Activated CD4-positive, alpha-beta memory T cell treated with anti-CD3 and anti-CD28 coated beads for 36 hours (primary cell): ENCODE measurements at regions of chr3 and their contacts with region 1.

Region 1: DNA sequence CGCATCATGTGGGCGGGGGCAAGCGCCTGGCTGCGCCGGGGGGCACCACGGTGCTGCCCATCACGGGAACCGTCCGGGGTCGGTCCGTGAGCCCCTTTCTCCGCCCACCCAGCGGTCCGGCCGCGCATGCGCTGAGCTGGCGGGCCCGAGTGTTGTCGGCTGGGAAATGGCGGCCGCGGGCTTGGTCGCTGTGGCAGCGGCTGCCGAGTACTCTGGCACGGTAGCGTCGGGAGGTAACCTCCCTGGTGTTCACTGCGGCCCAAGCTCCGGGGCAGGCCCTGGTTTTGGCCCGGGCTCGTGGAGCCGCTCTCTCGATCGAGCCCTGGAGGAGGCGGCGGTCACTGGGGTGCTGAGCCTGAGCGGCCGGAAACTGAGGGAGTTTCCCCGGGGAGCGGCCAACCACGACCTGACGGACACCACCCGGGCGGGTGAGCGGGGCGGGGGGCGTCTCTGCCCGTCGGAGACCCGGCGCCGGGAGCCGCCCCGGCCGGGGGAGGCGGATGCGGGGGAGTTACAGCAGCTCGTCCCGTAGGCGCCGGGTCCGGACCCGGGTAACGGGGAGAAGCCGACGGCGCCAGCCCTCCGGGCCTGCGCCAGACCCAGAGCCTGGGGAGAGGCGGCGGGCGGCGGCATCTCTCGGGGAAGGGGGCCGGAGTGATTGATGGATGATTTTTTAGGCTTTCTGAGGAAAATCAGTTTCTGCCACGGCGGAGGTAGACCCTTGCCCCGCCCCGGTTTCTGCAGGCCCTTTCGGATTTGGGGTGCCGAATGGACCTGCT is at the start of gene LRCH3:
- DNase-seq: peak; percentile 87
- H3K4me3 Mint-ChIP-seq: peak within 1 kb of the TSS; percentile 85
- H3K27ac Mint-ChIP-seq: peak within 1 kb of the TSS; percentile 88
- H3K4me1 Mint-ChIP-seq: peaks cover 29% of the 10 kb centered on the region
- H3K27me3 Mint-ChIP-seq: no peaks in the 10 kb centered on the region
- total RNA-seq, gene LRCH3: 50.1 to 51.1 TPM

Region 2: DNA sequence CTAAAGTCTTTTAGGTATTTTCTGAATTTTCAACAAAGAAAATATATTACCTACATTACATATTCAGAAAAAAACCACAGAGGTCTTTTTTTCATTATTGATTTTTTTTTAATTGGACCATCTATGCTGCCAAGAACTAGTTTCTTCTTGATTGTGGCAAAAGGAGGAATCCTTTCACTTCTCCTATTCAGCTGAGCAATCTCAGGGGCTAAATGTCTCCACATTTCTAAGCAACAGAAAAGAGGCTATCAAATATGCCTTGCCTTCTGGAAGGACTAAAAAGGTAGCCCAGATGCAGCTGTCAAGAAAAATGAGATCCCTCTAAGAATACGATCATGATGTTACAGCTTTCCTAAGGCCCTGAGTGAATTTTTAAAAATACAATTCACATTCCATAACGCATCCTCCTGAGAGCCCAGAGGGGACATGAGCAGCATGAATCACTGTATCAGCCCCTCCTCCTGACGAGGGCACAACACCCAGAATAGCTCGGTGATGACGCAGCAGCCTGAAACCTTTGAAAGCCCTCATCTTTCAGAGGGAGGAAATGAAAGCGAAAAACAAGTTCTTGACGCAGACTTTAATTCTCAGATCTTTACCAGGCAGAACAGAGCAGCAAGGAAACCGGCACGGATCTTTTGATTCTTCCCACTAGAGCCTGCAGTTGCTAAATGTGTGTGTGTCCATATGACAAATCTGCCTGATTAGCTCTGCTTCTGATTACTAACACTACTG is 79.2 kb before region 1 on chr3:
- CTCF ChIA-PET with region 1: no interaction called
- POLR2A ChIA-PET with region 1: interaction called, 5 read pairs
- intact Hi-C with region 1: loop called (anchors 1 kb)
- DNase-seq: peak; percentile 94
- H3K4me3 Mint-ChIP-seq: peak overlapping the region; percentile 62
- H3K27ac Mint-ChIP-seq: peak overlapping the region; percentile 86
- H3K4me1 Mint-ChIP-seq: peaks cover 35% of the 10 kb centered on the region
- H3K27me3 Mint-ChIP-seq: no peaks in the 10 kb centered on the region

Region 3: GRCh38 chr3:197736491-197737318 is 54.6 kb before region 1 on chr3 and contains the start of gene RUBCN:
- CTCF ChIA-PET with region 1: interaction called, 5 read pairs
- POLR2A ChIA-PET with region 1: interaction called, 6 read pairs
- intact Hi-C with region 1: loop called (anchors 1 kb)
- DNase-seq: peak; percentile 97
- H3K4me3 Mint-ChIP-seq: peak within 1 kb of the TSS; percentile 87
- H3K27ac Mint-ChIP-seq: peak within 1 kb of the TSS; percentile 82
- H3K4me1 Mint-ChIP-seq: peaks cover 40% of the 10 kb centered on the region
- H3K27me3 Mint-ChIP-seq: no peaks in the 10 kb centered on the region
- total RNA-seq, gene RUBCN: 32.9 to 33.3 TPM

Region 4: DNA sequence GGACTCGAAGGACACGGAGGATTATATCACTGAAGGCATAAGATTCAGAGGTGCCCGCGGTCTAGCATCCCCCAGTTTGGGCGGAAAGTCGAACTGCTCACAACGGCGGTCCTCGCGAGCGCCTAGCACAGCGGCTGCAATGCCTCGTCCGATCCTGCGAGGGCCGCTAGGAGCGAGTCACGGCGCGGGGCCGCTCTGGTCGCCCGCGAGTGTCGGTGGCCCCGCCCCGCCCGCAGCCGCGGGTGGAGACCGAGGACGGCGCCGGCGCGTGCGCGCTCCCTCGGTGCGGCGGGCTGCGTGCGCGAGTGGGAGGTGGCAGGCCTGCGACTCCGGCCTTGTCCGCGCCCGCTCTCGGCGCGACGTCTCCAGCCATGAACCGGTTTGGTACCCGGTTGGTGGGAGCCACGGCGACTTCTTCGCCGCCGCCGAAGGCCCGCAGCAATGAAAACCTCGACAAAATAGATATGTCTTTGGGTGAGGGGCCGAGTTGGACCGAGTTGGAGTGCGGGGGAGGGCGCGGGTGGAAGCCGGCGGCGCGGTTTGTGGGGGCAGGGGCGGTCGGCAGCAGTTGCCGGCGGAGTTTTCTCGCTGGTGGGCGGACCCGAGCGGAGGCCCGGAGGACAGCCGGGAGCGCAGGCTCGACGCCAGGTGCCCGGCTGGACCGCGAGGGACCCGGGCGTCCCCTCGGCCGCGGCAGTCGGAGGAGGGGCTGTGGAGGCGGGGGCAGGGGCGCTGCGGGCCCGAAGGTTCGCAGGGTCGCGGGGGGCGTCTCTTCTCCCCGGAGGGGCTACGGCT is 41.5 kb before region 1 on chr3 and contains the start of gene FYTTD1:
- CTCF ChIA-PET with region 1: interaction called, 6 read pairs
- POLR2A ChIA-PET with region 1: interaction called, 6 read pairs
- intact Hi-C with region 1: loop called (anchors 2 kb)
- DNase-seq: peak; percentile 90
- H3K4me3 Mint-ChIP-seq: peak within 1 kb of the TSS; percentile 98
- H3K27ac Mint-ChIP-seq: peak within 1 kb of the TSS; percentile 92
- H3K4me1 Mint-ChIP-seq: peaks cover 33% of the 10 kb centered on the region
- H3K27me3 Mint-ChIP-seq: no peaks in the 10 kb centered on the region
- total RNA-seq, gene FYTTD1: 35.5 to 39.9 TPM

Region 5: GRCh38 chr3:197801891-197802778 is 10.8 kb after region 1 on chr3:
- CTCF ChIA-PET with region 1: interaction called, 3 read pairs
- POLR2A ChIA-PET with region 1: no interaction called
- intact Hi-C with region 1: loop called (anchors 1 kb)
- DNase-seq: peak; percentile 53
- H3K4me3 Mint-ChIP-seq: no peak overlapping the region
- H3K27ac Mint-ChIP-seq: peak overlapping the region; percentile 79
- H3K4me1 Mint-ChIP-seq: peaks cover 48% of the 10 kb centered on the region
- H3K27me3 Mint-ChIP-seq: no peaks in the 10 kb centered on the region

Region 6: GRCh38 chr3:197847866-197848401 is 56.6 kb after region 1 on chr3:
- CTCF ChIA-PET with region 1: no interaction called
- POLR2A ChIA-PET with region 1: no interaction called
- intact Hi-C with region 1: loop called (anchors 5 kb)
- DNase-seq: peak; percentile 43
- H3K4me3 Mint-ChIP-seq: peak overlapping the region; percentile 59
- H3K27ac Mint-ChIP-seq: peak overlapping the region; percentile 82
- H3K4me1 Mint-ChIP-seq: peaks cover 26% of the 10 kb centered on the region
- H3K27me3 Mint-ChIP-seq: no peaks in the 10 kb centered on the region